ENCODE measurements at regions of chr3 and their contacts with region 1.

Region 1: DNA sequence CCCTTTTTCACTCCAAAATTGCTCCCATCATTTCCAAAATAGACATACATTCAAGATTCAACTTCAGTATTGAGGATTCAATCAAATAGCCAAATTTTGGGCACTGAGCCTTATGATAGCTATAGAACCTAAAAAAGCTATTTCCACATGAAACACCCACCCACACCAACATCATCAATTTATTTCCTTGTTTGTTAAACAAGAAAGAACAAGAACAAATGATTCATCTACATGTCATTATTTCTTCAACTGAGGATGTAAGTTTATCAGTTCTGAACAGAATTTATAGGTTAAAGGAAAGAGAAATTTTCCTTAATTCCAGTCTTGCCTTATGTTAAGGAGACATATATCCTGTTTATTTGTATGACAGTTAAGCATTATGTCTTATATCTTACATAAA is 32.2 kb downstream of the DPPA2 start:
- DNase-seq: no peak
- H3K4me3 ChIP-seq: no peak overlapping the region
- H3K27ac ChIP-seq: no peak overlapping the region
- H3K4me1 ChIP-seq: no peaks in the 10 kb centered on the region
- H3K27me3 ChIP-seq: no peaks in the 10 kb centered on the region
- CTCF ChIP-seq: no peak

Region 2: DNA sequence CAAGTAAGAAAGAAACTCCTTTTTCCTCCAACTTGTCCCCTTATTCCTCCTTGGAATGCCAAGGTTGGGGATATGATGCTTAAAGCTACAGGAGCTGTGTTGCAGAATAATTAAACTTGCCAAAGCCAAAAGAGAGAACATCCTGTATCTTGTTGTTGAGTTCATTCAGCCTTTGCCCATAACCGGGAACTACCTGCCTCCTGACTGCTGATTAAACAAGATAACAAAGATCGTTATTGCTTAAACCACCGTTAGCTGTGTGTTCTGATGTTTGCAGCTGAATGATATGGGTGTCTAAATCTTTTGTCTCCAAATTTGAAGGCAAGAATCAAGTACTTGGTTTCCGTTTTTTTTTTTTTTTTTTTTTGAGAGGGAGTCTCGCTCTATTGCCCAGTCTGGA is 29.3 kb before region 1 on chr3:
- CTCF ChIA-PET with region 1: no interaction called
- dilution Hi-C with region 1: loop called (anchors 5 kb)
- in situ Hi-C with region 1: no loop called
- intact Hi-C with region 1: no loop called
- DNase-seq: no peak
- H3K4me3 ChIP-seq: no peak overlapping the region
- H3K27ac ChIP-seq: no peak overlapping the region
- H3K4me1 ChIP-seq: no peaks in the 10 kb centered on the region
- H3K27me3 ChIP-seq: no peaks in the 10 kb centered on the region
- CTCF ChIP-seq: no peak

Region 3: GRCh38 chr3:109532257-109533216 is 248.5 kb after region 1 on chr3:
- CTCF ChIA-PET with region 1: no interaction called
- dilution Hi-C with region 1: loop called (anchors 10 kb)
- in situ Hi-C with region 1: no loop called
- intact Hi-C with region 1: no loop called
- DNase-seq: peak; percentile 69
- H3K4me3 ChIP-seq: no peak overlapping the region
- H3K27ac ChIP-seq: no peak overlapping the region
- H3K4me1 ChIP-seq: no peaks in the 10 kb centered on the region
- H3K27me3 ChIP-seq: no peaks in the 10 kb centered on the region
- CTCF ChIP-seq: peak; percentile 18 to 60

Measured in mammary epithelial cell (primary cell).